Keratinocyte (primary cell): ENCODE measurements at regions of chr6 and their contacts with region 1.

Region 1: DNA sequence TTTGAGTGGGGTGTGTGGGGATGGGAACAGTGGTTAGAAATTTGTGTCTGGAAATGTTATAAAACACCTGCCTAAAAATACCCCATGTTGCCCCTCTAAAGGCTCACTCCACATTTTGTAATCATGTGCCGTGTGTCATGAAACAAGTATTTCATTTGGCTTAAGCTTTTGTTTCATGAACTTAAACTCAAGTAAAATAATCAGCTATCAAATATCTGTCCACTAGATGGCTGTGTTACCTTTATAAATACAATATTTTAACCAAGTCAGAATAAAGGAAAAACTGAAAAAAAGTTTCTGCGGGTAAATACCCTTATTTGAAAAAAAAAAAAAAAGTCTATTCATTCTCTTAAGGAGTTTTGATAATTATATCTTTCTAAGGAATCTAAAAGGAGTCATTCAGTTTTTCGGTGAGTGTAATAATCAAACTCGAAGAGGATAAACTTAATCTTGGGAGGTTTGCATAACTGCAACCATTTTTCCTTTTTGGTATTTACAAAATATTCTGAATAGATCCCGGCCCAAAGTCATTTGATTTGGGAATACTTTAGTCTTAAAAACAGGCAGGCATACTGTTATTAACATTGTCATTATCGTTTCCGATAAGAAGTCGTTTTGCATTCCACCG is 29.9 kb upstream of the MTRF1L start:
- DNase-seq: no peak
- H3K4me3 ChIP-seq: no peak overlapping the region
- H3K27ac ChIP-seq: no peak overlapping the region
- H3K4me1 ChIP-seq: no peaks in the 10 kb centered on the region
- H3K27me3 ChIP-seq: no peaks in the 10 kb centered on the region
- CTCF ChIP-seq: peak in 2 of 3 experiments; percentile 12 to 35

Region 2: DNA sequence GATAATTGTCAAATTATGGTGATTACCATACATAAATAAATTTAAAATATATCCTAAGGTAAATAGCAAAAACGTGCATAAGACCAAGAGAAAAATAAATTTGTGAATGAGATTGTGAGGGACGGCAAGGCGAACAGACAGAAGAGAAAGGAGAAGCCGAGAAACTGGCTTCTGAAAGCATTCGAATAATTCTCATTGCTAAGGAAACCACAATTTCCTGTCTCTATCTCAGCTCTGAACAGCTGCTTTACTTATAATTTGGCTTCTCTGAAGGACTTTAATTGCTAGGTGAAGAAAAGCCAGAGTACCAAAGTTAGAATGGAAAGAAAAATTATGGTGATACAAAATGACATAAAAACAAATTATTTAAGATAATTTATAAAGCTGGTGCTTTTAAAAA is 177.7 kb after region 1 on chr6:
- dilution Hi-C with region 1: loop called (anchors 25 kb)
- DNase-seq: no peak
- H3K4me3 ChIP-seq: no peak overlapping the region
- H3K27ac ChIP-seq: no peak overlapping the region
- H3K4me1 ChIP-seq: no peaks in the 10 kb centered on the region
- H3K27me3 ChIP-seq: no peaks in the 10 kb centered on the region
- CTCF ChIP-seq: no peak